Activated CD8-positive, alpha-beta T cell treated with anti-CD3 and anti-CD28 coated beads for 36 hours (primary cell): ENCODE measurements at regions of chr6 and their contacts with region 1.

Region 1: GRCh38 chr6:152277826-152278329 is 359.3 kb downstream of the SYNE1 start:
- DNase-seq: no peak
- ATAC-seq: no peak
- H3K4me3 Mint-ChIP-seq: no peak overlapping the region
- H3K27ac Mint-ChIP-seq: no peak overlapping the region
- H3K4me1 Mint-ChIP-seq: no peaks in the 10 kb centered on the region
- H3K27me3 Mint-ChIP-seq: no peaks in the 10 kb centered on the region
- CTCF ChIP-seq: no peak

Region 2: GRCh38 chr6:152301764-152302568 is 24.1 kb after region 1 on chr6:
- CTCF ChIA-PET with region 1: interaction called, 10 read pairs
- POLR2A ChIA-PET with region 1: no interaction called
- intact Hi-C with region 1: no loop called
- DNase-seq: peak; percentile 95
- ATAC-seq: peak; percentile 94
- H3K4me3 Mint-ChIP-seq: peak overlapping the region; percentile 97
- H3K27ac Mint-ChIP-seq: peak overlapping the region; percentile 99
- H3K4me1 Mint-ChIP-seq: peaks cover 30% of the 10 kb centered on the region
- H3K27me3 Mint-ChIP-seq: no peaks in the 10 kb centered on the region
- CTCF ChIP-seq: peak; percentile 59

Region 3: DNA sequence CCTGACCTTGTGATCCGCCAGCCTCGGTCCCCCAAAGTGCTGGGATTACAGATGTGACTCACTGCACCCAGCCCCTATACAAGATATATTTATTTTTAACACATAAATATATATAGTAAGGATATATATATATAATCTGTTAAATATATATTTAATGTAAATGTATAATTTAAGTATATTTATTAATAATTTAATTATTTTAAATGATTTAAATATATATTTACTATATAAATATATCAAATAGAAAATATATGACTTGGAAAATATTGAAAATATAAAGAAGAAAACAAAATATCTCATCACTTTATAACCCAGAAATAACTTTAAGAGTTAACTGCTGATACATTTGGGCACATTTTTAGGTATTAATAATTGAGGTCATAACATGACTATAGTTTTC is 34.6 kb after region 1 on chr6:
- CTCF ChIA-PET with region 1: no interaction called
- POLR2A ChIA-PET with region 1: no interaction called
- intact Hi-C with region 1: no loop called
- DNase-seq: no peak
- ATAC-seq: no peak
- H3K4me3 Mint-ChIP-seq: no peak overlapping the region
- H3K27ac Mint-ChIP-seq: no peak overlapping the region
- H3K4me1 Mint-ChIP-seq: peaks cover 25% of the 10 kb centered on the region
- H3K27me3 Mint-ChIP-seq: no peaks in the 10 kb centered on the region
- CTCF ChIP-seq: no peak